ENCODE measurements at regions of chr6 and their contacts with region 1.

Region 1: GRCh38 chr6:29589423-29590048 is 4.6 kb downstream of the OR2H2 start:
- DNase-seq: peak; percentile 12
- ATAC-seq: peak; percentile 86
- H3K4me3 ChIP-seq: no peak overlapping the region
- H3K27ac ChIP-seq: no peak overlapping the region
- H3K4me1 ChIP-seq: no peaks in the 10 kb centered on the region
- H3K27me3 ChIP-seq: no peaks in the 10 kb centered on the region; a peak in 1 of 4 replicates
- CTCF ChIP-seq: peak; percentile 94 to 99 (median 99)
- EP300 ChIP-seq: no peak
- POLR2A ChIP-seq: no peak
- RAD21 ChIP-seq: peak; percentile 98

Region 2: DNA sequence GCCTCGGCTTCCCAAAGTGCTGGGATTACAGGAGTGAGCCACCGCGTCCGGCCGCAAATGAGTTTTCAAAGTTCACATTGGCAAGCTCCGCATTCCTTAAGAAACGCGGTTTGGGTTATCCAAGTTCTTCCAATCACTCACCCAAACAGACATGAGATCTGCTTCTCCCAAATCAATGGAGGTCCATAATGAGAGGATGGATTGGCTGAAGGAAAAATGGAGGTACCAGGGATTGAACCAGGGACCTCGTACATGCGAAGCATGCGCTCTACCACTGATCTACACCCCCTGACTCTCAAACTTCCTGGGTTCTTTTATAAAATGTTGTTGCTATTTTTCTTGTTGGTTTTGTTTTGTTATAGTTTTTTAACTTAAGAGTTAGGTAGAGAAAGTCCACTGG is 893.8 kb before region 1 on chr6:
- CTCF ChIA-PET with region 1: no interaction called
- POLR2A ChIA-PET with region 1: no interaction called
- RAD21 ChIA-PET with region 1: no interaction called
- SMC1A ChIA-PET with region 1: no interaction called
- in situ Hi-C with region 1: loop called (anchors 10 kb)
- intact Hi-C with region 1: no loop called
- DNase-seq: no peak
- ATAC-seq: no peak
- H3K4me3 ChIP-seq: no peak overlapping the region
- H3K27ac ChIP-seq: no peak overlapping the region
- H3K4me1 ChIP-seq: no peaks in the 10 kb centered on the region
- H3K27me3 ChIP-seq: peaks cover 5 to 18% of the 10 kb centered on the region in 2 experiments
- CTCF ChIP-seq: no peak
- EP300 ChIP-seq: no peak
- POLR2A ChIP-seq: no peak
- RAD21 ChIP-seq: no peak

Region 3: DNA sequence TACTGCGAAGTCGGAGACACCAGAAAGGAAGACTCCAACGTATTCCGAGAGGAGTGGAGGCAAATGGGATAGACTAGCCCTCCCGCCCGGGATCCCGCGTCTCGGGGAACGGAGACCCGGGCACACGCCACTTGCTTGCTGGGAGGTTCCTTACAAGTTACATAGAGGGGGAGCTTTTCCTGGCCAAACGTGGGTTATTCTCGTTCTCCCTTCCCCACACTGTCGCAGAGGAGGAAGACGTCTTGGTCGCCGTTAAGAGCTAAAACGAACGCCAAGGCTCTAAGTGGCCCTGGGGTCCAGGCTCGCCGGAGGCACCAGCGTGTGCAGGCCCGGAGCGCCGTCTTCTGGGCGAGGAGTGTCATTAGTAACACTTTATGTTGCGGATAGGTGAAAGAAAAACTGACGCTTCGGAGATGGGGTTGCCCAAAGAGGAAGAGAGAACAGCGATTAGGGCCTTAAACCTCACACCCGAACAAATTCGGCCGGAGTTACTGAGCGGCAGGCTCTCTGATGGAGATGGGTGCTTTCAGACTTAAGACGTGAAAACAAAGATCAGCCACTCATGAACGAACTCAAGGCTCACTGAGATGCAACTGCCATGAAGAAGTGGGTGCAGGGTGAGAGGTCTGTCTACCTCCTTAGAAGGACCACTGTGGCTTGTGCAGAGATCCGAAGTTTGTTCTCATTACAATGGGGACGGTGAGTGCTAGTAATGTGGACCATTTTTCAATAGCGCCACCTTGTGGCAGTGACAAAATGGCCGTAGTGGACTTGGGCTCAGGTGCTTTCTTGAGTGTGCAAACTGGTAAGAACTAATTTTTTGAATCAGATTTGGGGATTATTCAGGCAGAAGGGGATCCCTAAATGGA is 572.7 kb before region 1 on chr6:
- CTCF ChIA-PET with region 1: no interaction called
- POLR2A ChIA-PET with region 1: no interaction called
- RAD21 ChIA-PET with region 1: no interaction called
- SMC1A ChIA-PET with region 1: no interaction called
- in situ Hi-C with region 1: no loop called
- intact Hi-C with region 1: loop called (anchors 5 kb)
- DNase-seq: peak; percentile 56
- ATAC-seq: peak; percentile 97
- H3K4me3 ChIP-seq: peak overlapping the region; percentile 53
- H3K27ac ChIP-seq: no peak overlapping the region
- H3K4me1 ChIP-seq: no peaks in the 10 kb centered on the region
- H3K27me3 ChIP-seq: no peaks in the 10 kb centered on the region; a peak in 2 of 4 replicates
- CTCF ChIP-seq: peak; percentile 76 to 89 (median 78)
- EP300 ChIP-seq: no peak
- POLR2A ChIP-seq: no peak
- RAD21 ChIP-seq: peak; percentile 75

Region 4: DNA sequence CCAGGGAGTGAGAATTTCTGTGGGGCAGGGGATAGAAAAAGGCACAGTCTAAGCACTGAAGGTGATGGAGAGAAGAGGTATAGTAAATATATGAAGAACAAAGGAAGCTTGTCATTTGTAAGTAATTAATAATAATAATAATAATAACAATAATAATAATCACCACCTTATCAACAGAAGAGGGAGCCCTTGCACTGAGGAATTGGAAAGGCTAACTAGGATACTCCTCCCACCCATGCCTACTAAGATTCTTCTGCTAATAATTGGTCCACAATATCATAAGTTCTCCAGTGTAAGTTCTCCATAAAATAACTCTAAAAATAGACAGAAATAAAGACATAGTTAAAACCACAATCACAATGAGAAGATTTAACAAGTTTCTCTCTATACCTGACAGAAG is 213.5 kb before region 1 on chr6:
- CTCF ChIA-PET with region 1: interaction called, 30 read pairs
- POLR2A ChIA-PET with region 1: no interaction called
- RAD21 ChIA-PET with region 1: interaction called, 19 read pairs
- SMC1A ChIA-PET with region 1: interaction called, 20 read pairs
- in situ Hi-C with region 1: no loop called
- intact Hi-C with region 1: loop called (anchors 1 kb)
- DNase-seq: no peak
- ATAC-seq: no peak
- H3K4me3 ChIP-seq: no peak overlapping the region
- H3K27ac ChIP-seq: no peak overlapping the region
- H3K4me1 ChIP-seq: no peaks in the 10 kb centered on the region
- H3K27me3 ChIP-seq: no peaks in the 10 kb centered on the region
- CTCF ChIP-seq: peak in 1 of 3 experiments; percentile 16; a peak in 1 of 6 replicates
- EP300 ChIP-seq: no peak
- POLR2A ChIP-seq: no peak
- RAD21 ChIP-seq: peak; percentile 59

Region 5: DNA sequence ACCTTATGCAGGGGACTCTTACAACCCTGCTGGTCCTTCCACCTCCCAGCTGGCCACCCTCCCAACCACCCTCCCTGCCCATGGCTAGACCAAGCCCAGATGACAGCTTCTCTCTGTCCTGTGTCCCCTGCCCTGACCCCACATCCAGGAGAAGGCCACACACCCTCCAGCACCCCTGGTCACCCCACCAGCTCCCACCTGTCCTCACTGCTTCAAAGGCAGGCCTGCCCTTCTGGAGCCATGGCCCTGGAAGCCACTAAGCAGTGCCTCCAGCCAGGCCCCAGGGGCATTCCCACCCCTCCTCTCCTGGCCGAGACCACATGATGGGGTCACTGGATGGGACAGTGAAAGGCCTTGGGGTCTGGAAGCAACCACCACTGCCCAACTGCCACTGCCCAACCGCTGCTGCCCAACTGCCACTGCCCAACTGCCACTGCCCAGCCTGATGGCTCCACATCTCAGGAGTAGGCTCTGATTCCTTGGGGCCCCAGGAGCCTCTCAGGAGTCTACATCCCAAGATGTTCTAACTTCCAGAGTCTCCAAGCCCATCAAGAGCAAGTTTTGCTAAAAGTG is 60.5 kb before region 1 on chr6:
- CTCF ChIA-PET with region 1: no interaction called
- POLR2A ChIA-PET with region 1: no interaction called
- RAD21 ChIA-PET with region 1: no interaction called
- SMC1A ChIA-PET with region 1: no interaction called
- in situ Hi-C with region 1: no loop called
- intact Hi-C with region 1: no loop called
- DNase-seq: no peak
- ATAC-seq: no peak
- H3K4me3 ChIP-seq: no peak overlapping the region
- H3K27ac ChIP-seq: no peak overlapping the region
- H3K4me1 ChIP-seq: no peaks in the 10 kb centered on the region
- H3K27me3 ChIP-seq: 0 out of 4 replicates have a peak, but pooled peaks cover 0 to 2% of the 10 kb centered on the region in 2 experiments
- CTCF ChIP-seq: no peak
- EP300 ChIP-seq: no peak
- POLR2A ChIP-seq: no peak
- RAD21 ChIP-seq: no peak

Region 6: GRCh38 chr6:29762781-29763214 is 173.3 kb after region 1 on chr6:
- CTCF ChIA-PET with region 1: no interaction called
- POLR2A ChIA-PET with region 1: no interaction called
- RAD21 ChIA-PET with region 1: no interaction called
- SMC1A ChIA-PET with region 1: no interaction called
- in situ Hi-C with region 1: no loop called
- intact Hi-C with region 1: no loop called
- DNase-seq: no peak
- ATAC-seq: peak; percentile 78
- H3K4me3 ChIP-seq: no peak overlapping the region
- H3K27ac ChIP-seq: no peak overlapping the region
- H3K4me1 ChIP-seq: peaks cover 8% of the 10 kb centered on the region
- H3K27me3 ChIP-seq: no peaks in the 10 kb centered on the region
- CTCF ChIP-seq: no peak
- EP300 ChIP-seq: no peak
- POLR2A ChIP-seq: no peak
- RAD21 ChIP-seq: no peak

Measured in GM12878 (cell line).